Body of pancreas (tissue), 4 donors: ENCODE measurements at regions of chr12 and their contacts with region 1.

Region 1: DNA sequence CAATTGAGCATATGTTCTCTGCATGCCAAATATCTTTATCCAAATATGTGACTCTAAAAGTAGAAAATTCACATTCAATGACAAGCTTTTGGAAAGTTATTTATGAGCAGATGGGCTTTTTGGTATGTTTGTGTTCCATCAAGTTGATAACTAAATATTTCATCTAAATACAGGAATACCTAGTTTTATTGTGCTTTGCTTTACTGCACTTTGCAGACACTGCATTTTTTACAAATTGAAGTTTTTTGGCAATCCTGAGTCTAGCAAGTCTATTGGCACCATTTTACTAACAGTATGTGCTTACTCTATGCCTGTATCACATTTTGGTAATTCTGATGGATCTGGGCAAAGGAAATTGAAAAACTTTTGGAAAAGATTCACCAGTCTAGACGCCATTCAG is 133.8 kb downstream of the ATXN7L3B start:
- DNase-seq: no peak
- ATAC-seq: no peak
- H3K4me3 ChIP-seq: no peak overlapping the region
- H3K27ac ChIP-seq: no peak overlapping the region
- H3K4me1 ChIP-seq: no peaks in the 10 kb centered on the region
- H3K27me3 ChIP-seq: no peaks in the 10 kb centered on the region
- CTCF ChIP-seq: no peak
- POLR2A ChIP-seq: no peak

Region 2: DNA sequence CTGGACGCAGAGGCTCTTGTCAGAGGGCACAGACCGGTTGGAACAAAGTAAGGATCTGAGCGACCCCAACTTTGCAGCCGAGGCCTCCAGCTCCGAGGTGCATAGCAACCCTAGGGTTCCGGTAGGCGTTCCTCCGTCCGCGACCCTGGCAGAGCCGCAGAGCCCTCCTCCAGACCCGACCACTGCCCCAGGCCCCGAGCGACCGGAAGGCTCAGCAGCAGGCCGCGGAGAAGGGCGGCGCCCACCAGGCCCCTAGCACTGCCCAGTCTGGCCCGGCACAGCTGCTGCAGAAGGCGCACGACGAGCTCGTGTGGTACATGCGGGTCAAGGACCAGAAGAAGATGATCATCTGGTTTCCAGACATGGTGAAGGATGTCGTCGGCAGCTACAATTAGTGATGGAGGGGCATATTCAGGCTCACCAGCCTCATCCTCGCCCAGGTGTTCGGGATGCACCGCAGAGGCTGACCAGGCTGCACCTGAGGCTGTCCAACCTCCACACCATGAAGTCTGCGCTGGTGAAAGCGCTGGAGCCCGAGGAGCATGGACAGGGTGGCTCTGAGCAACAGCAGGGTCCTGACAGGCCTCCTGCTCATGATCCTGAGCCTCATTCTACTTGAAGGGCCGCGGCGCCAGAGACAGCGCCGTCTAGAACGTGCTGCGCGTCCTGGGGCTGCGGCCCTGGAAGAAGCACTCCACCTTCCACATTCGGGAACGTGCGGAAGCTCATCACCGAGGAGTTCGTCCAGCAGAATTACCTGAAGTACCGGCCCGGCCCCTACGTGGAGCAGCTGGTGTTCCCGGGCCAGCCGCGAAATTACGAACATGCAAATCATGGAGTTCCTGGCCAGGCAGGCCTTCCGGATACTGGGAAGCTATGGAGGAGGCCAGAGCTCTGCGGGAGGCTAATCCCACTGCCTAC is 634.3 kb after region 1 on chr12:
- intact Hi-C with region 1: loop called (anchors 10 kb)
- DNase-seq: no peak
- ATAC-seq: no peak
- H3K4me3 ChIP-seq: no peak overlapping the region
- H3K27ac ChIP-seq: no peak overlapping the region
- H3K4me1 ChIP-seq: no peaks in the 10 kb centered on the region
- H3K27me3 ChIP-seq: no peaks in the 10 kb centered on the region
- CTCF ChIP-seq: no peak
- POLR2A ChIP-seq: no peak